GM10248 (cell line): ENCODE measurements at regions of chr6 and their contacts with region 1.

Region 1: GRCh38 chr6:7238900-7239589 is 74.0 kb downstream of the SSR1 start:
- DNase-seq: peak; percentile 72
- CTCF ChIP-seq: peak; percentile 63

Region 2: DNA sequence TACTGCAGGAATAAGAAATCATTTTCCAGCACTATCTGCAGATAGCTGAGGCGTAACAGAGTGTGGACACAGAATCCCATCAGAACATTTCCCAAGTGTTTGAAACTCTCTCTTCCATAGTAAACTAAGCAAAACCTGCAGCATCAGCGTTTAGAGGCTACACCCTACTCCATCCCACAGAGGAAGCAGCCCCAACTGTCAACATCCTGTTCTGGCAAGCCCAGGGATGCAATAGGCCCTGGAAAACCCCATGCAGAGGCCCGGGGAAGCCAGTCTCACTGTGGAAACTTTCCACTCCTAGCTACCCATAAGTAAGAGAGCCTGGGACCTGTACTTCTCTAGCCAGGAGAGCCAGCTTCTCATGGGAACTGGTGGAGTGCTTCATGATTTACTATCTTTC is 521.1 kb before region 1 on chr6:
- CTCF ChIA-PET with region 1: interaction called, 24 read pairs
- POLR2A ChIA-PET with region 1: no interaction called
- DNase-seq: no peak
- CTCF ChIP-seq: no peak

Region 3: GRCh38 chr6:6758915-6759654 is 480.0 kb before region 1 on chr6:
- CTCF ChIA-PET with region 1: interaction called, 21 read pairs
- POLR2A ChIA-PET with region 1: no interaction called
- DNase-seq: peak; percentile 81
- CTCF ChIP-seq: peak; percentile 35

Region 4: GRCh38 chr6:7249946-7250643 is 11.1 kb after region 1 on chr6:
- CTCF ChIA-PET with region 1: interaction called, 58 read pairs
- POLR2A ChIA-PET with region 1: no interaction called
- DNase-seq: no peak
- CTCF ChIP-seq: no peak

Region 5: GRCh38 chr6:7270320-7271204 is 31.5 kb after region 1 on chr6:
- CTCF ChIA-PET with region 1: interaction called, 14 read pairs
- POLR2A ChIA-PET with region 1: no interaction called
- DNase-seq: no peak
- CTCF ChIP-seq: no peak